Cardiac septum (tissue), 1 donor: ENCODE measurements at regions of chr9 and their contacts with region 1.

Region 1: DNA sequence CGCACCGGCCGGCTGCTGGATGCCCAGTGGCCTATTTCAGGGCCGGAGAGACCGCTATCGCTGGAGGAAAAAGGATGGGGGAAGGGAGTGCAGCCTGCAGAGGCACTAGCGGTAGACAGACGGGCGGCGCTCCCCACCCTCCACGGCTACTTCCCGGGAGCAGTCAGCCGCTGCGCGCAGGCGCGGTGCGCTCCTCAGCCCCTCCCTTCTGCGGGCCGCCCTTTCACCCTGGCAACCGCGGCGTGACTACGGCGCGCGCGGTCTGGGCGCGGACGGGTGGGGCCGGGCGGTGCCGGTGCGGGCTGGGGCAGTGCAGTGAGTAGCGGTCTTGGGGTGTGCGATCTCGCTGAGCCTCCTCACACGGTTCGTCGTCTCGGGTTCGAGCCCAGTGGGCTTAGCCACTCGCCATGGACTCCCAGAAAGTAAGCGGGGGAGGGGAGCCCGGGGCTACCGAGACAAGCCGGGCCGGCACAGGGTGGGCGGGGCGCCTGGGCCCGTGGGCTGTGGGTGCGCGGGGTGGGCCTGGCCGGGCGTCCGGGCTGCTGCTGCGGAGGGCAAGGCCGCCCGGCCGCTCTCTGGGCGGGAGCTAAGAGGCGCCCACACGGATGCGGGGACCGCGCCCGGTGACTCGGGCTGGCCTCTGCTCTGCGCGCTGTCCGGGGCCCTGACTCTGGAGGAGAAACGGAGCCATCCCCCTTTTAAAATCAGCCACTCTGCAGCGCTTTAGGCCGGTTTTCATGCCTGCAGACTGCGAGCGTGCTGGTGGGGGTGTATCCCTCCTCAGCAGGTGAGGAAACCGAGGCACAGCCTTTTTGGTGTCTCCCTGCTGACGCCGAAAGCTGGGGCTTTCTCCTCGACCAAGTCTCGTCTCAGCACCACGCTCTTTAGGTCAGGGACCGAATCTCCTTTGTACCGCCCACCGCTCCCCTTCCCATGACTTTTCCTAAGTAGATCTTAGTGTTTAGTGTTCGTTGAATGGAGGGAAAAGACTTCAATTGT is at the start of gene FSD1L:
- DNase-seq: peak; percentile 97
- total RNA-seq, gene FSD1L: 10.8 TPM

Region 2: GRCh38 chr9:105500108-105500766 is 52.1 kb after region 1 on chr9:
- intact Hi-C with region 1: no loop called
- DNase-seq: no peak

Region 3: GRCh38 chr9:105694190-105694847 is 246.2 kb after region 1 on chr9 and contains the start of gene TMEM38B:
- intact Hi-C with region 1: loop called (anchors 10 kb)
- DNase-seq: peak; percentile 90
- total RNA-seq, gene TMEM38B: 36.2 TPM